ENCODE measurements at regions of chr5 and their contacts with region 1.

Region 1: DNA sequence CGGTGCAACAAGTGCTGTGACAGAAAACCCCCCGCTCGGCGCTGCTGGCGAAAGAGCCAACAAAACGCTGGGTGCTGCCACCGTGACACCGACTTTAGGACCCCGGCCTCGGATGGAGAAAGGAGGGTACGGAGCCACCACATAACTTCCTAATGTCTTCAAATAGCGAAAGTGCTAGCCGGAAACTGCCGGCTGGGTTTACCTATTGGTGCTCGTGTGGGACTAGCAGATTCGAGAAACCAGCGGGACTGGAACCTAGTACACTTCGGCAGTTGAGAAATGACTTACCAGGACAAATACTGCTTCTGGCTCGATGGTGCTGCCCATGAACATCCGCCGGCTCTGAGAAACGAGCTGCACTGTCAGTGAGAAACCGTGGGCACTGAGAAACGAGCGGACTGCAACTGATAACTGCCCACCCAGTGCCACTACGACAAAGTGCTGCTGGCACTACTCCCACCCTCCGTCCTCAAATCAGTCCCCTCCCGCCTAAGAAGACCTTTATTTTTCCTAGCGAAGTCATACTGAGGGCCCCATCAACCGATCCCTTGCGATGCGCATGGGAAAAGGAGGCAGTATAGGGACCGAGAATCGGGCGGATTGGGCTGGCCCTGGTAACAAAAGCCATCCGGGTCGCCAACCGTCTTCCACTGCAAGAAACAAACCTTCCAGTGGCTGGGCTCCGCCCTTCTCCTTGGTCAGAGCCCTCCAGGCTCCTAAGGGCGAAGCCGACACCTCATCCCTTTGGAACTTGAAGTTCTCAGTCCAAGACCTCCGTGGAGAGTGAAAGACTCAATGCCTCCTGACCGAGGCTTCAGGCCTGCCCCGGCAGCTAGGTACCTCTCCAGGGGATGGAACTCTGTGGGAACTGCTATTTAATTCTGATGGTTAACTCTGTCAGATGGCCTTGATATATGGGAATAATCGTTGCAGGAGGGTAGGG is 27.0 kb upstream of the ANXA2R start:
- DNase-seq: peak; percentile 93
- H3K4me3 ChIP-seq: peak overlapping the region; percentile 74
- H3K27ac ChIP-seq: peak overlapping the region; percentile 95
- H3K4me1 ChIP-seq: peaks cover 24% of the 10 kb centered on the region
- H3K27me3 ChIP-seq: no peaks in the 10 kb centered on the region
- CTCF ChIP-seq: no peak

Region 2: DNA sequence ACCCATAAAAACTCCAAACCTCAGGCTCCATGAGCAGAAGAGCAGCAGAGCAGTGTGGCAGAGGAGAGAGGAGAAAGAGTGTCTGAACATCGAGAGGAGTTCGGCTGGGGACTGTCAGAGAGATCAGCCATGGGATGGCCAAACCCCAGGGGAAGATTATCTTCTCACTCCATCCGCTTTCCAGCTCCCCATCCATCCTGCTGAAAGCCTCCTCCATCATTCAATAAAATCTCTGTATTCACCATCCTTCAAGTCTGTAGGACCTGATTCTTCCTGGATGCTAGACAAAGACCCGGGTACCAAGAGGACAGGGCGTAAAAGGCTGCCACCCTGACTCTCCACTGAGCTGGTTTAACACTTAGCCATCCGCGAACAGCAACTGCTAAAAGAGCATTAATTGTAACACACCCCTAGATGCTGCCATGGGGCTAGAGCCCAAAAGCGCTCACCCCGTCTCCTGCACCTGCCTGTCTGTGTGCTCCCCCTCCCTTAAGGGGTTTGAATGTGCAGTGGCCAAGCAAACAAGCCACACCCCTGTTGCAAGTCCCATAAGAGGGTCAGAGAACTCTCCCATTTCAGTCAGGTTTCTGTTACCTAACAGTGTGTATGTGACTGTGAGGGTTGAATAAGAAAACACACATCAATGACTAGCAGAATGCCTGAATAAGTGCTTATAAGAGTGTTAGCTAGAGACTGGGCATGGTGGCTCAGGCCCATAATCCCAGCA is 241.5 kb before region 1 on chr5:
- CTCF ChIA-PET with region 1: no interaction called
- POLR2A ChIA-PET with region 1: no interaction called
- intact Hi-C with region 1: no loop called
- DNase-seq: no peak
- H3K4me3 ChIP-seq: no peak overlapping the region
- H3K27ac ChIP-seq: no peak overlapping the region
- H3K4me1 ChIP-seq: no peaks in the 10 kb centered on the region
- H3K27me3 ChIP-seq: no peaks in the 10 kb centered on the region
- CTCF ChIP-seq: no peak

Region 3: GRCh38 chr5:42994246-42995151 is 72.6 kb before region 1 on chr5:
- CTCF ChIA-PET with region 1: no interaction called
- POLR2A ChIA-PET with region 1: no interaction called
- intact Hi-C with region 1: loop called (anchors 2 kb)
- DNase-seq: peak; percentile 96
- H3K4me3 ChIP-seq: peak overlapping the region; percentile 61
- H3K27ac ChIP-seq: peak overlapping the region; percentile 77
- H3K4me1 ChIP-seq: peaks cover 9% of the 10 kb centered on the region
- H3K27me3 ChIP-seq: no peaks in the 10 kb centered on the region
- CTCF ChIP-seq: peak; percentile 88

Region 4: GRCh38 chr5:43008369-43009153 is 58.5 kb before region 1 on chr5:
- CTCF ChIA-PET with region 1: no interaction called
- POLR2A ChIA-PET with region 1: no interaction called
- intact Hi-C with region 1: loop called (anchors 2 kb)
- DNase-seq: peak; percentile 98
- H3K4me3 ChIP-seq: peak overlapping the region; percentile 52
- H3K27ac ChIP-seq: peak overlapping the region; percentile 85
- H3K4me1 ChIP-seq: peaks cover 11% of the 10 kb centered on the region
- H3K27me3 ChIP-seq: no peaks in the 10 kb centered on the region
- CTCF ChIP-seq: peak; percentile 39; the same call in 1 of the 2 replicates

Region 5: DNA sequence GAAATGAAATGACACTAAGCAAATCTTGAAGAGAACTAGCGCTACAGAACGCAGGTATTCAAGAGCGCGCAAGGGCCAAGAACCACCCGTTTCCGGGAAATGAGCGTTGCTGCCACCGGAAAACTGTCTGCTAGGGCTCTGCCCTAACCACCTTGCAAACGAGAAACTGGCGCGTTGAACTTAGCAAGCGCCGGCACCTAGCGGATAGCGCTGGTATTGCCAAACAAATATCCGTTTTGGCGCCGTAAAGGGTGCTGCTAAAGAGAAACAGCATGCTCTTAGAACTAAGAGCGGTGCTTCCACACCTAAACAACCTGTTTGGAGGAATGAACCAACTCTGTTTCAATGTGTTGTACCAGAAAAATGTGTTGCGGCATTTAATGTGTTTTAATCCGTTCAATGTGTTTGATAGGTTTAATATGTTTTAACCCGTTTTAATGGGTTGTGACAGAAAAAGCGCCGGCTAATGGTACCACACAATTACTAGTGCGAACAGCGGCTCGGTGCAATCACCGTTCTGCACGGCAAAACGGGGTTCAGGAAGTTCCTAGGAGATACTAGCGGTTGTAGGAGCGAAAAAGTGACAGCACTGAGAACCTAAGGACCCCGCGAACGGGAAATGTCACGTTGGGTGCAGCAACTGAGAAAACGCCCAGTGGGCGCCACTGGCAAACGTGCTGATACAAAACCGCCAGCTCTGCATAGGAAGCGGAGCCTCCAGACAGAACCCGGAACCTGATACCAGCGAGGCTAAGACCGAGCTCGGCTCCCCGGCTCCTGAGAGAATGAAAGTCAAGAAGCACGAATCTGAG is 26.6 kb before region 1 on chr5 and contains the start of gene ANXA2R:
- CTCF ChIA-PET with region 1: interaction called, 10 read pairs
- POLR2A ChIA-PET with region 1: no interaction called
- intact Hi-C with region 1: loop called (anchors 1 kb)
- DNase-seq: peak; percentile 97
- H3K4me3 ChIP-seq: peak within 1 kb of the TSS; percentile 62
- H3K27ac ChIP-seq: peak within 1 kb of the TSS; percentile 88
- H3K4me1 ChIP-seq: no peaks in the 10 kb centered on the region
- H3K27me3 ChIP-seq: no peaks in the 10 kb centered on the region
- CTCF ChIP-seq: peak; percentile 78
- total RNA-seq, gene ANXA2R: 1.4 and 1.9 TPM in 2 replicates

Region 6: GRCh38 chr5:43105369-43106289 is 38.6 kb after region 1 on chr5:
- CTCF ChIA-PET with region 1: no interaction called
- POLR2A ChIA-PET with region 1: no interaction called
- intact Hi-C with region 1: loop called (anchors 5 kb)
- DNase-seq: peak; percentile 97
- H3K4me3 ChIP-seq: peak overlapping the region; percentile 41
- H3K27ac ChIP-seq: no peak overlapping the region
- H3K4me1 ChIP-seq: no peaks in the 10 kb centered on the region
- H3K27me3 ChIP-seq: no peaks in the 10 kb centered on the region
- CTCF ChIP-seq: peak; percentile 100

Region 7: GRCh38 chr5:43305948-43306565 is 239.0 kb after region 1 on chr5:
- CTCF ChIA-PET with region 1: no interaction called
- POLR2A ChIA-PET with region 1: no interaction called
- intact Hi-C with region 1: loop called (anchors 10 kb)
- DNase-seq: peak; percentile 80
- H3K4me3 ChIP-seq: no peak overlapping the region
- H3K27ac ChIP-seq: no peak overlapping the region
- H3K4me1 ChIP-seq: peaks cover 44% of the 10 kb centered on the region
- H3K27me3 ChIP-seq: no peaks in the 10 kb centered on the region
- CTCF ChIP-seq: peak; percentile 85

Region 8: DNA sequence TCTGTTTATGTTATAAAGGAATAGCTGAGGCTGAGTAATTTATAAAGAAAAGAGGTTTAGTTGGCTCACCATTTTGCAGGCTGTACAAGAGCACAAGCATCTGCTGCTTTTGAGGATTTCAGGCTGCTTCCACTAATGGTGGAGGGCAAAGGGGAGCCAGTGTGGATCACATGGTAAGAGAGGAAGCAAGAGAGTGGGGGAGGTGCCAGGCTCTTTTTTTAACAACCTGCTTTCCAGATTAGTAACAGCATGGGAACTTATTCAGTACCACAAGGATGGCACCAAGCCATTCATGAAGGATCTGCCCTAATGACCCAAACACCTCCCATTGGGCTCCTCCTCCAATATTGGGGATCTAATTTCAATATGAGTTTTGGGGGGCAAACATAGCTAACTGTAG is 304.8 kb after region 1 on chr5:
- CTCF ChIA-PET with region 1: no interaction called
- POLR2A ChIA-PET with region 1: no interaction called
- intact Hi-C with region 1: no loop called
- DNase-seq: no peak
- H3K4me3 ChIP-seq: no peak overlapping the region
- H3K27ac ChIP-seq: no peak overlapping the region
- H3K4me1 ChIP-seq: no peaks in the 10 kb centered on the region
- H3K27me3 ChIP-seq: no peaks in the 10 kb centered on the region
- CTCF ChIP-seq: no peak